ENCODE measurements at regions of chr13 and their contacts with region 1.

Region 1: DNA sequence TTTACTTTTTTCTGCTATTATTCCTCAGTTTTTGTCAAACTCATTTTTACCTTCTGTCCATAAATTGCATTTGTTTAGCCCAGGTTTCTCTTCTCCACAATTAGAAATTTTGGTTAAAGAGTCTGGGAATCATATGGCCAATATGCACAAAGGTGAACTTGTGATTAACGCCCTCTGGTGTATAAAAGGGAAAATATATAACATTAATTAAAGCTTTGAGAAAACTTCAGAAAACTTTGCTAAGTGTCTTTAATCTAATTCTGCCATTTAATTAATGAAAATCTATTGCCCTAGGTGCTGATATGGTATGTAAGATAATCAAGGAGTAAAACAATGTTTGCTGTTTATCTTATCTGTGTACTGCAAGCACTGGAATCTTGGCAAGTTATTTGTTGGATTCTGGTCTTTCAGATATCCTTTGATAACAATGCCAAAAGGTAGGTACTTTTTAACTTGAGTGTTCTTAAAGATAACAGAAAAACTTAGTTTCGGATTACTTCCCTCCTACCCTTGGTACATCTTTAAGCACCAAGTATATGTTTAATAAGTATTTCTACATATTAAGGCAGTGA is 402.6 kb downstream of the SUCLA2 start:
- DNase-seq: no peak
- ATAC-seq: no peak
- H3K4me3 ChIP-seq: no peak overlapping the region
- H3K27ac ChIP-seq: no peak overlapping the region
- H3K4me1 ChIP-seq: no peaks in the 10 kb centered on the region
- H3K27me3 ChIP-seq: peaks cover 5% of the 10 kb centered on the region; the same call in 1 of the 2 replicates
- CTCF ChIP-seq: peak in 2 of 3 experiments; percentile 20 to 44; a peak in 2 of 6 replicates
- POLR2A ChIP-seq: no peak
- RAD21 ChIP-seq: peak; percentile 16; the same call in 1 of the 2 replicates

Region 2: GRCh38 chr13:46893798-46894560 is 704.4 kb before region 1 on chr13:
- CTCF ChIA-PET with region 1: no interaction called
- POLR2A ChIA-PET with region 1: no interaction called
- RAD21 ChIA-PET with region 1: no interaction called
- intact Hi-C with region 1: loop called (anchors 10 kb)
- DNase-seq: peak; percentile 6
- ATAC-seq: peak; percentile 97
- H3K4me3 ChIP-seq: no peak overlapping the region
- H3K27ac ChIP-seq: no peak overlapping the region
- H3K4me1 ChIP-seq: no peaks in the 10 kb centered on the region
- H3K27me3 ChIP-seq: peaks cover 94% of the 10 kb centered on the region
- CTCF ChIP-seq: peak; percentile 21 to 95 (median 92); a peak in 5 of 6 replicates
- POLR2A ChIP-seq: no peak
- RAD21 ChIP-seq: peak; percentile 38

Measured in HCT116 (cell line).